ENCODE measurements at regions of chr12 and their contacts with region 1.

Region 1: GRCh38 chr12:111434680-111435338 is 29.1 kb downstream of the SH2B3 start:
- DNase-seq: peak; percentile 94
- ATAC-seq: peak; percentile 73
- H3K4me3 Mint-ChIP-seq: peak overlapping the region; percentile 62
- H3K27ac Mint-ChIP-seq: peak overlapping the region; percentile 95
- H3K4me1 Mint-ChIP-seq: peaks cover 86% of the 10 kb centered on the region
- H3K27me3 Mint-ChIP-seq: no peaks in the 10 kb centered on the region
- CTCF ChIP-seq: no peak

Region 2: DNA sequence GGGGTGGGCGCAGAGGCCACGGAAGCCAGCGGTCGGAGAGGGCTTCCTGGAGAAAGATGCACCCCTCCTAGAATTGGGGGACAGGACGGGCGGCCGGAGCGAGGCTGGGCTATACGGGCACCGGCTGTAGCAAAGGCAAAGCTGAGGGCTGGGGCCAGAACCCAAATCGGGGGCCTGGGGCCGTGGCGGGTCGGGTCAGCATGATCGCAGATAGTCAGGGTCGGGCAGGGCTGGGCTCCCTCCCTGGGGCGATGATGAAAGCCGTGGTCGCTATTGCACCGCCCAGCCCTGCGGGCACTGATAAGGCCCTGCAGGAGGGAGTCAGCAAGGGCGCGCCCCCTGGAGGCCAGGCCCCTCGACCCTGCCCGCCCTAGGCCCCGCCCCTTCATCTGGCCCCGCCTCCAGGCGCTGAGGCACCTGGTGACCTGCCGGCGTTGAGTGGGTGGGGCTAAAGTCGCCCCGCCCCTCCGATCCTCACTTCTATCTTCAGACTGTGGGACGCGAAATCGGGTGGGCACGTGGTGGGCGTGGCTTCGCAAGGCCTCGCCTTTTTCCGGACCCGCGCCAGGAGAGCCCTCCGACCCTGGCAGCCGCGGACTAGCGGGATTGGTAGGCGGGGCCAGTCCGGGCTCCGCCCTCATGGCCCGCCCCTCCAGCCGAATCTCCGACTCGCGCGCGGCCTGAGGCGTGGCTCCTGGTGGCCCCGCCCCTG is 29.5 kb before region 1 on chr12:
- CTCF ChIA-PET with region 1: interaction called, 1,222 read pairs
- POLR2A ChIA-PET with region 1: interaction called, 225 read pairs
- intact Hi-C with region 1: loop called (anchors 2 kb)
- DNase-seq: peak; percentile 100
- ATAC-seq: peak; percentile 81
- H3K4me3 Mint-ChIP-seq: peak overlapping the region; percentile 73
- H3K27ac Mint-ChIP-seq: peak overlapping the region; percentile 96
- H3K4me1 Mint-ChIP-seq: peaks cover 50% of the 10 kb centered on the region
- H3K27me3 Mint-ChIP-seq: no peaks in the 10 kb centered on the region
- CTCF ChIP-seq: peak; percentile 58

Measured in activated CD8-positive, alpha-beta T cell treated with anti-CD3 and anti-CD28 coated beads for 36 hours (primary cell).